CD8-positive, alpha-beta T cell (primary cell): ENCODE measurements at regions of chr14 and their contacts with region 1.

Region 1: GRCh38 chr14:22099942-22100763 is 426.5 kb upstream of the OR4E1 start:
- DNase-seq: peak; percentile 21 to 81 (median 54)
- ATAC-seq: peak; percentile 70
- H3K4me3 ChIP-seq: no peak overlapping the region
- H3K4me3 Mint-ChIP-seq: no peak overlapping the region
- H3K27ac ChIP-seq: no peak overlapping the region
- H3K27ac Mint-ChIP-seq: no peak overlapping the region
- H3K4me1 ChIP-seq: peaks cover 34% of the 10 kb centered on the region
- H3K4me1 Mint-ChIP-seq: peaks cover 56% of the 10 kb centered on the region
- H3K27me3 ChIP-seq: no peaks in the 10 kb centered on the region
- H3K27me3 Mint-ChIP-seq: no peaks in the 10 kb centered on the region
- CTCF ChIP-seq: peak; percentile 48

Region 2: DNA sequence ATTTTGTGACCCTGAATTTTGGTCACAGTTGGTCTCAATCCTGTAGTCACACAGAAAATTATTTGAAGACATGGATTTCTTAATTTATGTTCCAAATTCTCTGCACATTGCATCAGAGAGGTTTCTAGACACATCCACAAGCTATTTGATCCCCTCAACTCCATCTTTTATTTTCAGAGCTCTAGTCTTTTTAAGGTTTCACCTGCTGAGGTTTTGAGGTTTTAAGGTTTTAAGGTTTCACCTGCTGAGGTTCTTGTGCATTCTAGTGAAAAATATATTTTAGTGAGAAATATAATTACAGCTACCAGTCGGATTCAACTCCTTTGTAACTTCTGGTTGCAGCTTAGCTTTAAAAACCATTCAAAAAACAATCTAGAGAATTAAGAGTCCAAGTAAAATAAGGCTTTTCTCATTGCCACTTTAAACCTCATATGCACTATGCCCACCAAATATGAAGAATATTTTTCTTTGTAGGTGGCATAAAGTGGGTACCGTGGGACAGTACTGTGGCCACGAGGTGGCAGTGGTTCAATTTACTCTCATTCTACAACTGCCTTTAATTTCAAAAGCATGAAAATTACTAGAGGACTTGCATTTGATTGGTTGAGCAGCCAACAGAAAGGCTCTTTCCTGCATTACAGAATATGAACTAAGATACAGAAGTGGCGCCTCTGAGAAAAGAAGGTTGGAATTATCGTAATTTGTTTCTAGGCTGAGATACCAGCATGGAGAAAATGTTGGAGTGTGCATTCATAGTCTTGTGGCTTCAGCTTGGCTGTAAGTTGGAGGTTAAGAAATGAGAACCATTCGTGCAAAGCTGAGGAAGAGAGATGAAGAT is 60.0 kb before region 1 on chr14:
- CTCF ChIA-PET with region 1: interaction called, 22 read pairs
- POLR2A ChIA-PET with region 1: no interaction called
- intact Hi-C with region 1: no loop called
- DNase-seq: peak in 8 of 9 experiments; percentile 1 to 72 (median 52)
- ATAC-seq: peak; percentile 95
- H3K4me3 ChIP-seq: peak overlapping the region; percentile 9 to 35
- H3K4me3 Mint-ChIP-seq: peak overlapping the region; percentile 79
- H3K27ac ChIP-seq: no peak overlapping the region
- H3K27ac Mint-ChIP-seq: peak overlapping the region; percentile 87
- H3K4me1 ChIP-seq: peaks cover 4% of the 10 kb centered on the region
- H3K4me1 Mint-ChIP-seq: peaks cover 16% of the 10 kb centered on the region
- H3K27me3 ChIP-seq: no peaks in the 10 kb centered on the region
- H3K27me3 Mint-ChIP-seq: no peaks in the 10 kb centered on the region
- CTCF ChIP-seq: peak; percentile 72

Region 3: GRCh38 chr14:22065347-22065746 is 34.8 kb before region 1 on chr14:
- CTCF ChIA-PET with region 1: interaction called, 15 read pairs
- POLR2A ChIA-PET with region 1: interaction called, 9 read pairs
- intact Hi-C with region 1: loop called (anchors 2 to 5 kb)
- DNase-seq: peak in 1 of 9 experiments; percentile 26
- ATAC-seq: peak; percentile 26
- H3K4me3 ChIP-seq: no peak overlapping the region
- H3K4me3 Mint-ChIP-seq: peak overlapping the region; percentile 36
- H3K27ac ChIP-seq: no peak overlapping the region
- H3K27ac Mint-ChIP-seq: peak overlapping the region; percentile 37
- H3K4me1 ChIP-seq: peaks cover 18% of the 10 kb centered on the region
- H3K4me1 Mint-ChIP-seq: peaks cover 31% of the 10 kb centered on the region
- H3K27me3 ChIP-seq: no peaks in the 10 kb centered on the region
- H3K27me3 Mint-ChIP-seq: no peaks in the 10 kb centered on the region
- CTCF ChIP-seq: no peak

Region 4: DNA sequence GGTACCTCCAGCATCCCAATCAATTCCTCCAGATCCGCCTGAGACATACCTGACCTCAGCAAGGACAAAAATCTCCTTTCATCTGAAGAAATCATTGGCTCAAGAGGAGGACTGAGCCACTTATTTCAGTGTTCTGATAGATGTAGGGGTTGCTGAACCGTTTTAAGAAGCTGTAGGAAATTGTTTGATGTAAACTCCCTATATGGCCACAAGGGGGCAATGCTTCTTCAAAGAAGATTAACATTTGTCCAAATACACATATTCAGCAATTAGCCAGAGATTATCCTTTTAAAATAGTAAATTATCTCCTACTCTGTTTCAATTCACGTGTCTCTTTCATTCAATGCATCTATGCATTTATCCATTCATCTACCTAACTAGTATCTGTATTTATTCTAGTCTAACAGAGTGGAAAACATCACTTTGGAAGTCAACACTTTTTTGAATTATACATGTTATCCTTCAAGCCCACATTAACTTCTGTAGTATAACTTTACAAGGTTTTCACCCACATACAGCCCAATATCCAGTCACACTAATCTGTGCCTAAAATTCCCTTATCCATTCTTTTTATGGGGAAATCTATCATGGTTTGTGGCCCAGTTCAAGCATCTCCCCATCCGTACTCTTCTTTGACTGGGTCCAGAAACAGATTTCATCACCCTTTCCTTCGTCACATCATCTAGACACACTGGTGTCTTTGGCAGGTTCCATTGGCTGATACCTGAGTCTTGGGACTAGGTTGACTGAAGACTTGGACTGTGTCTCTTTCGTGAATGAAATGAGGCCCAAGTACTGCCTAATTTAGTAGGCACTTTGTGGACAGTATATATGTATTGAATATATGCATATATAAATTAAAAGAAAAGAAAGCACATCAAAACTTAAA is 15.5 kb before region 1 on chr14:
- CTCF ChIA-PET with region 1: interaction called, 21 read pairs
- POLR2A ChIA-PET with region 1: interaction called, 3 read pairs
- intact Hi-C with region 1: loop called (anchors 1 kb)
- DNase-seq: peak in 3 of 9 experiments; percentile 20 to 74 (median 58)
- ATAC-seq: peak; percentile 65
- H3K4me3 ChIP-seq: no peak overlapping the region
- H3K4me3 Mint-ChIP-seq: peak overlapping the region; percentile 32
- H3K27ac ChIP-seq: no peak overlapping the region
- H3K27ac Mint-ChIP-seq: peak overlapping the region; percentile 76
- H3K4me1 ChIP-seq: no peaks in the 10 kb centered on the region
- H3K4me1 Mint-ChIP-seq: peaks cover 33% of the 10 kb centered on the region
- H3K27me3 ChIP-seq: no peaks in the 10 kb centered on the region
- H3K27me3 Mint-ChIP-seq: no peaks in the 10 kb centered on the region
- CTCF ChIP-seq: peak; percentile 54

Region 5: DNA sequence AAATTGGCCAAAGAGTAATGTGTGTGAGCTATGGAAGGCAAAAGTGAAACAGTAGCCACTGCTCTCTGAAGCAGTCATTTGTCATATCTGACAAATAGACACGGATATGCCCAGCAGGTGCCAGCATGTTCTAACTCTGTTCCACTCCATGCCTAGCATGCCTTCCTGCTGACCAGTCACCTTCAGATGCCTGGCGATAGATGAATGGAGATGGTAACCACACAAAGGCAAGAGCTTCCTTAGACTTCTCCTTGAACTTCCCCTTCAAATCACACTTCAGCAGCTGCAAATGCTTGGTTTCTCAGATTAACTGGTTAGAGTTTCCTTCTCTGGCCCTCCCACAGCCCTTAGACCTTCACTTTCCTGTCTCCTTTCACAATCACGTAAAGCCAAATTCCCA is 58.9 kb after region 1 on chr14:
- CTCF ChIA-PET with region 1: no interaction called
- POLR2A ChIA-PET with region 1: no interaction called
- intact Hi-C with region 1: no loop called
- DNase-seq: no peak
- ATAC-seq: no peak
- H3K4me3 ChIP-seq: no peak overlapping the region
- H3K4me3 Mint-ChIP-seq: no peak overlapping the region
- H3K27ac ChIP-seq: no peak overlapping the region
- H3K27ac Mint-ChIP-seq: peak overlapping the region; percentile 57
- H3K4me1 ChIP-seq: no peaks in the 10 kb centered on the region
- H3K4me1 Mint-ChIP-seq: peaks cover 16% of the 10 kb centered on the region
- H3K27me3 ChIP-seq: no peaks in the 10 kb centered on the region
- H3K27me3 Mint-ChIP-seq: no peaks in the 10 kb centered on the region
- CTCF ChIP-seq: no peak